ENCODE measurements at regions of chr2 and their contacts with region 1.

Region 1: GRCh38 chr2:136045835-136046570 is 60.6 kb upstream of the DARS1 start:
- DNase-seq: no peak
- H3K4me3 ChIP-seq: no peak overlapping the region
- H3K27ac ChIP-seq: no peak overlapping the region
- H3K4me1 ChIP-seq: no peaks in the 10 kb centered on the region
- H3K27me3 ChIP-seq: no peaks in the 10 kb centered on the region
- CTCF ChIP-seq: no peak
- POLR2A ChIP-seq: no peak

Region 2: GRCh38 chr2:136107051-136108033 is 61.3 kb after region 1 on chr2:
- intact Hi-C with region 1: loop called (anchors 2 kb)
- DNase-seq: no peak
- H3K4me3 ChIP-seq: no peak overlapping the region
- H3K27ac ChIP-seq: no peak overlapping the region
- H3K4me1 ChIP-seq: no peaks in the 10 kb centered on the region
- H3K27me3 ChIP-seq: no peaks in the 10 kb centered on the region
- CTCF ChIP-seq: no peak
- POLR2A ChIP-seq: no peak